ENCODE measurements at regions of chr13 and their contacts with region 1.

Region 1: GRCh38 chr13:31236211-31236786 is 36.5 kb downstream of the B3GLCT start:
- DNase-seq: peak; percentile 28
- H3K4me3 ChIP-seq: no peak overlapping the region
- CTCF ChIP-seq: peak; percentile 75

Region 2: DNA sequence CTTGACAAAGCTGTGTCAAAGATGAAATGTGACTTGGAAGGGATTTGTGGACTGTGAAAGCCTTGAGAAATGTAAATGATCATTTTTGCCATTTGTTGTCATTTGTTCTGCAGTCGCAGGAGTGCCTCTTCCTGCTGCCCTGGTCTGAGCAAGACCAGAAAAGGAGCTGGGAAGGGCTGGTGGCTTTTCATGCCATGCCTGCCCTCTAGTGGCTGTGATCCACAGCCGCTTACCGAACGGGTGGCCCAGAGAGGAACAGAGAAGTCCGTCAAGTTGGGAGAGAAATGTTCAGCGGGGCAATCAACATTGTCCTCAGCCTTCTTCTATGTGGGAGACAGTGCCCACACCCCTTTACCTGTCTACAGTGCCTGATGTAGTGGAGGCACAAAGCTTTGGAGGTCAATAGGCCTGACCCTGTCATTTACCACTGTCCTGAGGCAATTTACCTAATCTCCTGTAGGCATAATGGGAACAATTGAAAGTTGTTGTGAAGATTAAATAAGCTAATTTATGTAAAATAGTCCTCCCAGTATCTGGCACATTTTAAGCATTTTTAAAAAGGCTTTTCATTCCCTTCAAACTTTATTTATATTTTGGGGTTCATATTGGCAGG is 187.9 kb after region 1 on chr13:
- in situ Hi-C with region 1: loop called (anchors 25 kb)
- DNase-seq: peak; percentile 68
- H3K4me3 ChIP-seq: no peak overlapping the region
- CTCF ChIP-seq: peak; percentile 95

Measured in astrocyte of the cerebellum (primary cell).